HEK293T (cell line): ENCODE measurements at regions of chr7 and their contacts with region 1.

Region 1: DNA sequence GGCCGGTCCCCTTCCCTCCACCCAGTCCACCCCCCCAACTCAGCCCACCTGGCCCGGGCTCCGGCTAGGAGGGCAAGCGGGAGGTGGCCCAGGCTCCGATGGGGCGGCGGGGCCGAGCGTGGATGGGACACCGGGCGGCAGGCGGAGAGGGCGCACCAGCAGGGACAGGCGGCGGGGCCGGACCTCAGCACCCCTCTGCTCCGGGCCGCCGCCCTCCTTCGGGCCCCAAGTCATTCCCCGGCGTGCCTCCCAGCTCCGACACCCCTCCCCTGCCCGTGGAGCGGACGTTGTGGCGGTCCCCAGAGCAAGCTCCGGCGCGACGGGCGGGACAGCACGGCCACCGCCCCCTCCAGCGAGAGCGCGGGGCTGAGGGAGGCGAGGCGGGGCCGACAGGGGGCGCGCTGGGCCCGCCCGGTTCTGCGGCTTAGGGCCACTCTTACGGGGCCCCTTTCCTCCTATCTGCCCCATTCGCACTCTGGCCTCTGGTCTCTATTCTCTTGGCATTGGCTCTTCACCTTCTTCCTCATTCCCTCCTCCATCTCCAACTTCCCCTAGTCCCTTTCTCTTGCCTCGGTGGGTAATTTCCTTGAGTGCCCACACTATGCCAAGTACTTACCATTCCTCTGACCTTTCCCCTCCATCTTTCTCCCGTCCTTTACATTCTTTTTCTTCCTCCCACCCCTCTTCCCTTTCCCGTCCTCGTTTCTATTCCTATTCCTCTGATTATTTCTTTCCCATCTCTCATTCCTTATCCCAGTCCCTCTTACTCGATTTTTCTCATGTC is 701 bp upstream of the GBX1 start:
- DNase-seq: peak; percentile 90

Region 2: DNA sequence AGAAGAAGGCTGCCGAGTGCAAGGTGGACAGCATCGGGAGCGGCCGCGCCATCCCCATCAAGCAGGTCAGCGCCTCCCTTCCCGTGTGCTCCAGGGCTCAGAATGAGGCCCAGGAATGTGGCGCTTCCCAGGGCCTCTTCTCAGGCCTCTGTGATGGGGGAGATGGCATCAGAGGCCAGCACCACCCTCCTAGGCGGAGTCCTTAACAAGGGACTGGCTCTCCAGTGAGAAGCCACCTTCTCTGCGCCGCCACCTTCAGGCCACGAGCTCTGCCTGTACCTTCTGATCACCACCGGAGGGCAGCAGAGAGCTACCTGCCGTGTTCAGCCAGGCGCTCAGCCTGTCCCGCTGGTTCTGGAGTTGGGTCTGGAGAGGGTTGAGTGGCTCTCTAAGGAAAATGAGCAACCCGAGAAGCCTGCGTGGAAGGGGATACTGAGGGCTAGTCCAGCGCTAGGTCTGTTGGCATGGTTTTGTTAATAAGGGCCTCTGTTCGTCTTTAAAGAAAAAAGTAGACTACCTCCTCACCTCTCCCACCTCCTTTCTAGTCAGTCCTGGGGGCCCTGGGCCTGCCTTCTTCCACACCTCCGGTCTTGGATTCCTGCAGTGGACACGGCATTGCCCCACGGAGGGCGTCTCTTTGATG is 44.3 kb before region 1 on chr7:
- CTCF ChIA-PET with region 1: interaction called, 10 read pairs
- POLR2A ChIA-PET with region 1: interaction called, 4 read pairs
- DNase-seq: peak; percentile 99

Region 3: DNA sequence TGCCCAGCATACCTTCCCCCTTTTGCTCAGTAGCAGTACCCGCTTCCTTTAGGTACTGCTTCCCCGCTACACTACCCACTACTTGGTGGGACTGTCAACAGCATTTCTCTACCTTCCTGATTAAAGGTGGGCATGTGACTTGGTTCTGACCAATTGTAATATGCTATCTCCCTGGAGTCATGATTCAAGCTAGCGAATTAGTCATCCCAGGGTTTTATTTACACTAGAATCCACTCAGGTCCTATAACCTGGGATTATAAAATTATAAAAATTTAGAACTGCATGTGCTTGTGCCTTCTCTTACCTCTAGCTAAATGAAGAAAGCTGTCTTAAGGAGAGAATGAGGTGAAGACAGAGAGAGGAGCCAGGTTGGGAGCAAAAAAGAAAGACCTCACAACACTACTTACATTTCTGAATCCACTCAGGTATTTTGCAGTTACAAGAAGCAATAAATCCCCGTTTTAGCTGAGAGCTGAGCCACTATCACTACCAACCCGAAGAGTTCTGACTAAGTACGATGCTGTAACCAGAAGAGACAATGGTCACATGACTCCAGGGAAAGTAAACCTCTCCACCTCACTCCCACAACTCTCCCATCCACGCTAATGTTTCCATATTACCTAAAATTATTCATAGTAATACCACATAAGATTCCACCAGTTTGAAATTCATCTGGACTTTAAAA is 10.4 kb before region 1 on chr7:
- CTCF ChIA-PET with region 1: interaction called, 30 read pairs
- POLR2A ChIA-PET with region 1: interaction called, 17 read pairs
- DNase-seq: no peak